ENCODE measurements at regions of chr10 and their contacts with region 1.

Region 1: GRCh38 chr10:33265621-33266020 is 68.8 kb downstream of the NRP1 start:
- DNase-seq: peak; percentile 77
- H3K4me3 Mint-ChIP-seq: no peak overlapping the region
- H3K27ac Mint-ChIP-seq: peak overlapping the region; percentile 13
- H3K4me1 Mint-ChIP-seq: peaks cover 28% of the 10 kb centered on the region
- H3K27me3 Mint-ChIP-seq: peaks cover 32% of the 10 kb centered on the region

Region 2: DNA sequence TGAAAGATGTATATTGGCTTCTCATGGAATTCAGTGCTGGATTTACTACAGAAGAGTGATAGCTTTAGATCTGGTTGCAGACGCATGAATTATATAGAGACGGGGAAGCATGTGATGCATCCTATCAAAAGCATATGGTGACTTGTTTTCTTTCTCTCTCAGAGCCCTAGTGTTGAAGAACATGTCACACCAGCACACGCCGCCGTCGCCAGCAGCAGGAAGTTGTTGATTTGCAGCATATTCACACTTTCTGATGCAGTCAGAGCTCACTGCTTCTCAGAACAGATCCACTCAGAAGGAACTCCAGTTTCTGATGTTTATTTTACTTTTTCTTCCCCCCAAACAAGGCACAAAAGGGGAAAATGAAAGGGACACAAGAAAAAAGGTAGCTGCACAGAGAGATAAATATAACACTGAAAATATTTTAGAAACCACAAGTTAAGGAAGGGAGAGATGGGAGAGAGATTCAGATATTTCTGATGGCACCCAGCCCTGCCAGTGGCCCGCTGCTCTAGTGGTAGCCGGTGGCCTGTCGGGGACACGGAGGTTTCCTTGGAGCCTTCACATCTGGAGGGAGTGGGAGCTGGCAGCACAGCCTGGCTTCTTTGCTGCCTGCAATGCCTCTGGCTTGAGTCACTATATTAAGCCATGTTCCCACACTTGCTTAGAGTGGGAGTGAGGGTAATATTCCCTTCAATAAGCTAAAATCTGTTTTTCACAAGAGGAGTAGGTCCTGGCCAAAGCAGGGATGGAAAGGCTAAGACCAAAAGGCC is 54.3 kb before region 1 on chr10:
- CTCF ChIA-PET with region 1: no interaction called
- POLR2A ChIA-PET with region 1: no interaction called
- intact Hi-C with region 1: loop called (anchors 2 kb)
- DNase-seq: peak; percentile 56
- H3K4me3 Mint-ChIP-seq: no peak overlapping the region
- H3K27ac Mint-ChIP-seq: peak overlapping the region; percentile 36
- H3K4me1 Mint-ChIP-seq: peaks cover 20% of the 10 kb centered on the region
- H3K27me3 Mint-ChIP-seq: no peaks in the 10 kb centered on the region

Region 3: GRCh38 chr10:34121781-34122628 is 856.4 kb after region 1 on chr10:
- CTCF ChIA-PET with region 1: no interaction called
- POLR2A ChIA-PET with region 1: no interaction called
- intact Hi-C with region 1: loop called (anchors 5 kb)
- DNase-seq: peak; percentile 18
- H3K4me3 Mint-ChIP-seq: no peak overlapping the region
- H3K27ac Mint-ChIP-seq: no peak overlapping the region
- H3K4me1 Mint-ChIP-seq: peaks cover 24% of the 10 kb centered on the region
- H3K27me3 Mint-ChIP-seq: peaks cover 3% of the 10 kb centered on the region

Measured in activated CD4-positive, alpha-beta memory T cell treated with anti-CD3 and anti-CD28 coated beads for 36 hours (primary cell).